ENCODE measurements at regions of chr6 and their contacts with region 1.

Region 1: DNA sequence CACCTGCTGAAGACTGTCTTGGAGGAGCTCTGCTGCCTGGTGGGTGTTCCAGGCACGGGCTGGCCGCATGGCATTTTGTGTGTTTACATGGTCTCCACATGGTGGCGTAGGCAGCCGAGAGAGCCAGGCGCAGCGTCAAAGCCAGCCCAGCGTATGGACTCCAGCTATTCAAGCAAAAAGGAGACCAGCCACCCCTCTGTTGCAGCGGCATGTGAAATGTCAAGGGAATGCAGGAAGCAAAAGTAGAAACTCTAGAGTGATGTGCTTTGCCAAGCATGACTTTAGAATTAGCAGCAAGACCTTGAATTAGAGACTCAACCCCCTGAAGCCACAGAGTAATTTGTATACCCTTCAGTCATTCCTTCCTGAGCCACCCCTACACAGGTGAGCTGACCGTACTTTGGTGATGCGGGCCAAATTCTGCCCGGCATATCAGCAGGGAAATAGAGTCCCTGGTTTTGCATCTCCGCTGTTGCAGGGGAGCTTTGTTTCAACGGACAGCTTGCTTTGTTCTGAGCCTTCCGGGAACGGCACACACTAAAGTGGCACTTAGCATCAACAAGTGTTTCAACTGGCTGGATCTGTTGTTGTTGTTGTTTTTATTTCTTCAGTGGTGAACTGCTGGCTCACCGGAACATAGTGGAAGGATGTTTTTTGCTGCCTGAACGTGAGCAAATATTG is 48.5 kb downstream of the FNDC1 start:
- DNase-seq: peak; percentile 72
- H3K4me3 ChIP-seq: no peak overlapping the region
- H3K27ac ChIP-seq: no peak overlapping the region
- H3K4me1 ChIP-seq: no peaks in the 10 kb centered on the region
- H3K27me3 ChIP-seq: peaks cover 44% of the 10 kb centered on the region
- CTCF ChIP-seq: peak; percentile 57
- EP300 ChIP-seq: no peak
- RAD21 ChIP-seq: peak; percentile 72

Region 2: DNA sequence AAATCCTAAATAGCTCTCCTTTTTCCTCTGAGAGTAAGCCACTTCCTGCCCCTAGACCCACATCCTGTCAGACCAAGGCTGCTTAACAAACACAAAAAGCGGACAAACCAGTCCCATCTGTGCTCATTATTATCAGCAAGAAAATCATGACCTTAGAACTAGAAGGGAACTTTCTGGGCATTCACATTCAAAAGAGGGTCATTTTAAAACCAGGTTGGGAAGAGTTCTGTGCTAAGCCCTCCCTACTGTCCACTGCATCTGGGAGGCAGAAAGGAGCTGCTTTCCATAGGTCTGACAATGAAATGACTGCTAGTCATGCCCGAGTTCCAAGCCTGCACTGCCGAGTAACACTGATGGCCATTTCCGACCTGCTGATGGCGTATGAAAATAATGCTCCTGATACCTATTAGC is 414.0 kb before region 1 on chr6:
- CTCF ChIA-PET with region 1: no interaction called
- POLR2A ChIA-PET with region 1: no interaction called
- DNase-seq: no peak
- H3K4me3 ChIP-seq: no peak overlapping the region
- H3K27ac ChIP-seq: peak overlapping the region; percentile 40 to 65; a peak in 3 of 4 replicates
- H3K4me1 ChIP-seq: peaks cover 18 to 28% of the 10 kb centered on the region in 2 experiments; a peak in 3 of 4 replicates
- H3K27me3 ChIP-seq: no peaks in the 10 kb centered on the region
- CTCF ChIP-seq: no peak
- EP300 ChIP-seq: no peak
- RAD21 ChIP-seq: no peak

Region 3: GRCh38 chr6:158926416-158926815 is 291.3 kb before region 1 on chr6:
- CTCF ChIA-PET with region 1: no interaction called
- POLR2A ChIA-PET with region 1: no interaction called
- DNase-seq: no peak
- H3K4me3 ChIP-seq: no peak overlapping the region
- H3K27ac ChIP-seq: peak overlapping the region in 1 of 2 experiments; percentile 31; a peak in 1 of 4 replicates
- H3K4me1 ChIP-seq: no peaks in the 10 kb centered on the region
- H3K27me3 ChIP-seq: no peaks in the 10 kb centered on the region
- CTCF ChIP-seq: no peak
- EP300 ChIP-seq: no peak
- RAD21 ChIP-seq: no peak

Region 4: GRCh38 chr6:159203304-159204005 is 14.3 kb before region 1 on chr6:
- CTCF ChIA-PET with region 1: interaction called, 13 read pairs
- POLR2A ChIA-PET with region 1: no interaction called
- DNase-seq: no peak
- H3K4me3 ChIP-seq: no peak overlapping the region
- H3K27ac ChIP-seq: peak overlapping the region in 1 of 2 experiments; percentile 38; a peak in 2 of 4 replicates
- H3K4me1 ChIP-seq: no peaks in the 10 kb centered on the region
- H3K27me3 ChIP-seq: no peaks in the 10 kb centered on the region; the same call in 1 of the 2 replicates
- CTCF ChIP-seq: no peak
- EP300 ChIP-seq: no peak
- RAD21 ChIP-seq: no peak

Region 5: DNA sequence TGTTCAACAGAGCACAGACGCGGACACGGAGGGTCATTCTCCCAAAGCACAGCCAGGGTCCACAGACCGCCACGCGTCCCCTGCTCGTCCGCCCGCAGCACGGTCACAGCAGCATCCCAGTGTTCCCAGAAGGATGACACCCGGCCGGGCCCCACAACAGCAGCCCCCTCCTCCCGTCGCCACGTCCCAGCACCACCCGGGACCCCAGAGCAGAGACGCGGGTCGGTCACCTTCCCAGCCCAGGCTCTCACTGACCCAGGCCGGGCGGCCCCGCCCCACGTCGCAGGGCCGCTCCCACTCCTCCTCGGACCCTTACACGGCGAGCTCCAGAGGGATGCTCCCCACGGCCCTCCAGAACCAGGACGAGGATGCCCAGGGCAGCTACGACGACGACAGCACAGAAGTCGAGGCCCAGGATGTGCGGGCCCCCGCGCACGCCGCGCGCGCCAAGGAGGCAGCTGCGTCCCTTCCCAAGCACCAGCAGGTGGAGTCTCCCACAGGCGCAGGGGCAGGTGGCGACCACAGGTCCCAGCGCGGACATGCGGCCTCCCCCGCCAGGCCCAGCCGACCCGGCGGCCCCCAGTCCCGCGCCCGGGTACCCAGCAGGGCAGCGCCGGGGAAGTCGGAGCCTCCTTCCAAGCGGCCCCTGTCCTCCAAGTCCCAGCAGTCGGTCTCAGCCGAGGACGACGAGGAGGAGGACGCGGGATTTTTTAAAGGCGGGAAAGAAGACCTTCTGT is 15.8 kb after region 1 on chr6:
- CTCF ChIA-PET with region 1: interaction called, 32 read pairs
- POLR2A ChIA-PET with region 1: no interaction called
- DNase-seq: peak; percentile 33
- H3K4me3 ChIP-seq: no peak overlapping the region
- H3K27ac ChIP-seq: no peak overlapping the region
- H3K4me1 ChIP-seq: no peaks in the 10 kb centered on the region
- H3K27me3 ChIP-seq: peaks cover 64% of the 10 kb centered on the region
- CTCF ChIP-seq: no peak
- EP300 ChIP-seq: no peak
- RAD21 ChIP-seq: no peak

Region 6: DNA sequence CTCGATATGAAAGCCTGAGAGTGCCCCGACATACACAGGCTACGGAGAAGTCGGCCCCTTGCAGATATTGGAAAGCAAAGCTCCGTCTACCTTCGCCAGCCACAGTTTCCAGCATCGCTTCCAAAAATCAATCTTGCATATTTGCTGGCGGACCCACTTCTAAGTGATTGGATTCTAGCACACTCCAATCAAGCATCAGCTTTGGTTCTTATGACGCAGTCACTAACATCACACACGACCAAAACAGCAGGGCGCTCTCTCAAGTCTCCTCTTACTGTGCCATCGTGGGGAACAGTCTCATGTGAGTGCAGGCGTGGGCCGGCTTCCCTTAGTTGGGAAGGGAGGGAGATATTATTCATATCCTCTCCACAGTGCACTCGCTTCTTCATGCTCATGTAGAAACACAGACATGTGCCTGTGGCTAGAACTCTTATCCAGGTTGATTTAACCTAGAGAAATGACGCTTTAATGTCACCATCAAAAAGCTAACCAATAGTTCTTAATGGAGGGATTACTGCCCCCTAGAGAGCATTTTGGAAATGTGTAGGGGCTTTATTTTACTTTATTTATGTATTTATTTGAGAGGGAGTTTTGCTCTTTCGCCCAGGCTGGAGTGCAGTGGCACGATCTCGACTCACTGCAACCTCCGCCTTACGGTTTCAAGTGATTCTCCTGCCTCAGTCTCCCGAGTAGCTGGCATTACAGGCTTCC is 245.5 kb after region 1 on chr6:
- CTCF ChIA-PET with region 1: interaction called, 68 read pairs
- POLR2A ChIA-PET with region 1: no interaction called
- DNase-seq: peak; percentile 31
- H3K4me3 ChIP-seq: no peak overlapping the region
- H3K27ac ChIP-seq: no peak overlapping the region
- H3K4me1 ChIP-seq: no peaks in the 10 kb centered on the region
- H3K27me3 ChIP-seq: peaks cover 16% of the 10 kb centered on the region; the same call in 1 of the 2 replicates
- CTCF ChIP-seq: peak; percentile 60
- EP300 ChIP-seq: no peak
- RAD21 ChIP-seq: peak; percentile 69

Measured in SK-N-SH (cell line).